ENCODE measurements at regions of chr16 and their contacts with region 1.

Region 1: GRCh38 chr16:28524681-28525171 is 14.0 kb downstream of the NUPR1 start:
- DNase-seq: no peak
- ATAC-seq: peak in 1 of 8 donors; percentile 28
- H3K4me3 ChIP-seq: no peak overlapping the region
- H3K27ac ChIP-seq: no peak overlapping the region
- H3K4me1 ChIP-seq: peaks cover 0 to 6% (median 0%) of the 10 kb centered on the region in 9 donors
- H3K27me3 ChIP-seq: no peaks in the 10 kb centered on the region
- CTCF ChIP-seq: no peak

Region 2: GRCh38 chr16:28572696-28573510 is 48.2 kb after region 1 on chr16:
- intact Hi-C with region 1: loop called in 1 of 10 experiments (anchors 10 kb)
- DNase-seq: peak in 1 of 2 donors; percentile 44
- ATAC-seq: peak; percentile 87 to 95 (median 92)
- H3K4me3 ChIP-seq: no peak overlapping the region
- H3K27ac ChIP-seq: peak overlapping the region in 8 of 10 donors; percentile 10 to 68 (median 44)
- H3K4me1 ChIP-seq: peaks cover 0 to 30% (median 24%) of the 10 kb centered on the region in 9 donors
- H3K27me3 ChIP-seq: no peaks in the 10 kb centered on the region
- CTCF ChIP-seq: no peak